Prostate gland (tissue), 2 donors: ENCODE measurements at regions of chr17 and their contacts with region 1.

Region 1: GRCh38 chr17:1455797-1456599 is at the start of gene CRK:
- DNase-seq: peak; percentile 95
- H3K4me3 ChIP-seq: peak within 1 kb of the TSS; percentile 94 to 99
- H3K27ac ChIP-seq: peak within 1 kb of the TSS; percentile 92 to 97
- H3K4me1 ChIP-seq: peaks cover 9% of the 10 kb centered on the region
- H3K27me3 ChIP-seq: no peaks in the 10 kb centered on the region
- CTCF ChIP-seq: peak in 2 of 4 experiments; percentile 20 to 35
- POLR2A ChIP-seq: peak; percentile 96
- total RNA-seq, gene CRK: 52.6 to 77.7 TPM

Region 2: GRCh38 chr17:1170739-1171138 is 285.3 kb before region 1 on chr17:
- intact Hi-C with region 1: no loop called
- DNase-seq: no peak
- H3K4me3 ChIP-seq: no peak overlapping the region
- H3K27ac ChIP-seq: no peak overlapping the region
- H3K4me1 ChIP-seq: no peaks in the 10 kb centered on the region
- H3K27me3 ChIP-seq: no peaks in the 10 kb centered on the region
- CTCF ChIP-seq: no peak
- POLR2A ChIP-seq: no peak

Region 3: DNA sequence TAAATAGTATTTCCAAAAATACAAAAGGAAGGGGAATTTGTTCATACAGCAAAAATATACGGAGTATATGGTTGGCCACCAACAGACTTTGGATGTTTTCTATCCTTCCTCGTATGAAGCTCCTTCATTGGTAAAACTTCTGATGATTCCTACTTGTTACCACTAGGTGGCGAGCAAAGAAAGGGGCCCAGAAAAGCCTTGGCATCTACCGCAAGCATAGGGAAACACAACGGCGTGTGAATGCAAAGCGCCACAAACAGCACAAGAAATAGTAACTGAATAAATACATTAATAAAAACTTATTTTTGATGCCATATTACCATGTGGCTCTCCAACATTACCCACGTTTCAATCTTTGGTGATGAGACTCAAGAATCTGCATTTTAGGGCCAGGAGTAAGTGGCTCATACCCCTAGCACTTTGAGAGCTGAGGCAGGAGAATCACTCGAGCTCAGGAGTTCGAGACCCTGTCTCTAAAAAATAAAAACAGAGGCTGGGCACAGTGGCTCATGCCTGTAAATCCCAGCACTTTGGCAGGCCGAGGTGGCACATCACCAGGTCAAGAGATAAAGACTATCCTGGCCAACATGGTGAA is 90.5 kb before region 1 on chr17:
- intact Hi-C with region 1: loop called (anchors 5 kb)
- DNase-seq: peak; percentile 67
- H3K4me3 ChIP-seq: no peak overlapping the region
- H3K27ac ChIP-seq: peak overlapping the region in 1 of 2 donors; percentile 12
- H3K4me1 ChIP-seq: peaks cover 10% of the 10 kb centered on the region
- H3K27me3 ChIP-seq: no peaks in the 10 kb centered on the region
- CTCF ChIP-seq: peak; percentile 73 to 87 (median 86)
- POLR2A ChIP-seq: no peak

Region 4: DNA sequence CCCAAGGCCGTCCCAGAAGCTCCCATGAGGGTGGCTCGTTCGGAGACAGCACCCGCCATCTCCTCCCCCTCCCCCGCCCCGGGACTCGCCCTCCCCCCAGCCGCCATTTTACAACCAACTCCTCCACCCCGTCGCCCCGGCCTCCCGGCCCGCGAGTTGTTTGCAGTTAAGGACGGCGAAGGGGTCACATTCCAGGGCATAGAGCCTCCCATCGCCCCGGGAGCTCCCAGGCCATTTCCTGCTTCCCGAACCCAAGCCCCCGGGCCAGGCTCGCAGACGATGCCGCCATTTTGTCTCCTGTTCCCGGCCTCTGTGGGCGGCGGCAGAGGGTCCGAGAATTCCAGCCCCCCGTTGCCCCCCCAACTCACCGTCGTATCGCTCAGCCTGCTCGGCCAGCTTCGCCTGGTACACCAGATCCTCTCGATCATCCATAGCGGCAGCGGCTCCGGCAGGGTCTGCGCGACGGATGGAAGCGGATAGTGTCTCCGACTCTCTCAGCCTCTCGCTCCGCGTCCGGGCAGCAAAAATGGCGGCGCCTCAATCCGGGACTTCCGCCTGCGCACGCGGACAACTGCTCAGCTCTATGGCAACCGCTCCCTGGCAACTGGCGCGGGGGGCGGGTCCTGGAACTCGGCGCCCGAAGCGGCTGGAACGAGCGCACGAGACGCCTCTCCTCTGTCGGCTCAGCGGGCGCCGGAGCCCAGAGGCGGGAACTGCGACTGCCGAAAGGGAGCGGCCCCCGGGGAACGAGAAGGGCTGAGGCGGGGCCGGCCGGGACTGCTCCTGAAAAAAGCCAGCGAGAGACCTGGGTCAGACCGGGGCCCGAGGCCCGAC is 56.1 kb before region 1 on chr17 and contains the start of gene YWHAE:
- intact Hi-C with region 1: loop called (anchors 1 kb)
- DNase-seq: peak; percentile 97
- H3K4me3 ChIP-seq: peak within 1 kb of the TSS; percentile 85 to 95
- H3K27ac ChIP-seq: peak within 1 kb of the TSS; percentile 97 to 99
- H3K4me1 ChIP-seq: peaks cover 12% of the 10 kb centered on the region
- H3K27me3 ChIP-seq: no peaks in the 10 kb centered on the region
- CTCF ChIP-seq: peak in 1 of 4 experiments; percentile 29
- POLR2A ChIP-seq: peak; percentile 91
- total RNA-seq, gene YWHAE: 643 to 716 TPM

Region 5: DNA sequence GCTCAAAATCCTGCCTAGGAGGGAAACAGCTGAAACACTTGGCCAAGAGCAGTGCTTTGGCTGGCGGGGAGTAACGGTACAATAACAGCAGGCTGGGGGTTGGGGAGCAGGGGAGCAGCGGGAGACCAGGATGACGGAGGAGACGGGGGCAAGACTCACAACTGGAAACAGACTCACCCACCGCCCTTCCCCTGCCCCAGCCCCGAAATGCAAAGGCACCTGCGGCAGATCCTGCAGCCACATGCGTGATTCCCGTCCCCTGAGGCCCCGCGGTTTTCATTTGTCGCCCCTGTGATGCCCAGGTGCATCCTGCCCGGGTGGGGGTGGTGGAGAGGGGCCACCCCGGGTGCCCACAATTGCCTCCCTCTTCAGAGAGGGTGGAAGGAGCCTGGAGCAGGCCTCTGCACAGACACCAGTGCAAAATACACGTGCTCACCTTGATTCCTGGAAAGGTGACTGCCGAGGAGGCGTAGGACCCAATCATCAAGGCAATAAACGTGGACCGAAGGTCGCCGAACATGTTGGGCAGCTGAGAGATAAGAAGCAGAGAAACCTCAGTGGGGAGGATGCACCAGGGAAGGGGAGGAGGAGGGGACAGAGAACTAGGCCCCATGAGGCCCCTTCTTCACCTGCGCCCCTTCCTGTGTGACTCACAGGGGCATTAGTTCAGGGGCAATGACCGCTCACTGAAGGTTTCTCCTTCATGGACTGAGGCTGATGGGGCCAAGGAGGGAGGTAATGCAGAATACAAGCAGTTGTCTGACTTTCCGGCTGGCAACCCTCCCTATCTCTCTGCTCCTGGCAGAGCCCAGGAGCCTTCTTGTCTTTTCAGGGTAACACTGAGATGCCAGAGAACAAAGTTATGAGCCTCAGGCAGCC is 137.0 kb after region 1 on chr17:
- intact Hi-C with region 1: no loop called
- DNase-seq: no peak
- H3K4me3 ChIP-seq: no peak overlapping the region
- H3K27ac ChIP-seq: no peak overlapping the region
- H3K4me1 ChIP-seq: no peaks in the 10 kb centered on the region
- H3K27me3 ChIP-seq: no peaks in the 10 kb centered on the region
- CTCF ChIP-seq: no peak
- POLR2A ChIP-seq: no peak